Left cardiac atrium (tissue), 4 donors: ENCODE measurements at regions of chr6 and their contacts with region 1.

Region 1: DNA sequence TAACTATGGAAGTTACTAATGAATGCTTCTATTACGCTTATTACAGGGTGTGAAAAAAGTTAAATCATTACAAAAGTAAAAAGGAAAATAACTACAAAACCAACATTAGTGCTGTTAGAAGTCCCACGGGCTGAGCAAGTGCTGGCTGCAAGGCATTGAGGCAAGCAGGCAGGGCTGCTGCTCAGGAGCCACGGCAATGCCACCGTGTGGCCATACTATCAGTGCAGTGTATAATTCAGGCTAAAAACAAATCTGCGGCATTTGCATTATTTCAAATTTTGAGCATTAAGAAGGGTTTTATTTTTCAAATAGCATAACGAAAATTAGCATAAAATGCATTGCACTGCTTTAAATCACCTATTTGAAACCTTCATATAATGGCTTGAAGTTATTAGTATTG is 17.1 kb downstream of the IFNGR1 start:
- DNase-seq: no peak
- ATAC-seq: peak; percentile 70 to 89

Region 2: DNA sequence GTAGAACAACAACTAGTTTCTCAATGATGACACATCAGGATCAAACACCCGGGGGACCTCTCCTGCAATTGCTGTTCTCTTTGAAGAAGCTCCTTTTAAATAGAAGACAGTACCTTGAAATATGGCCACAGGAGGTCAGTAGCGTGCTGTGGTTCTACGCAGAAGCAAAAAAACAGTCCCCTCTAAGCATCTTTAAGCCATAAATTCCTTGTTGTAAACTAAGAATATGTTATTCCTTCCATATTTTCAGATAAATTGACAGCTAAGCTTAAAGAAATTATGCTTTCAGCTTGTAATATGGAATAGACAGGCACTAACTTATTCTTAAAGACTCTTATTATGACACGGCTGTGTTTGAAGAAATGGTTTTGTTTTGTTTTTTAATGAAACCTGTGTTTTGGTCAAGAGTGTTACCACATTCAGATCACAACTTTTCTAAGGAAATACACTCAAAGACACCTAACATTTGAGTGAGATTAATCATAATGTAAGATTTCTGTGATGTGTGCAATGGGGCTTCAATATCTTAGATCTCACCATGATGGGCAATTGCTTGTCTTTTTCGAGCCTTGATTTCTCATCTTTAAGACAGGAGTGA is 107.6 kb before region 1 on chr6:
- intact Hi-C with region 1: loop called in 1 of 2 experiments (anchors 5 kb)
- DNase-seq: peak; percentile 43
- ATAC-seq: peak; percentile 61 to 69

Region 3: GRCh38 chr6:137571854-137572253 is 369.8 kb after region 1 on chr6:
- intact Hi-C with region 1: no loop called
- DNase-seq: no peak
- ATAC-seq: no peak